GM10248 (cell line): ENCODE measurements at regions of chr6 and their contacts with region 1.

Region 1: DNA sequence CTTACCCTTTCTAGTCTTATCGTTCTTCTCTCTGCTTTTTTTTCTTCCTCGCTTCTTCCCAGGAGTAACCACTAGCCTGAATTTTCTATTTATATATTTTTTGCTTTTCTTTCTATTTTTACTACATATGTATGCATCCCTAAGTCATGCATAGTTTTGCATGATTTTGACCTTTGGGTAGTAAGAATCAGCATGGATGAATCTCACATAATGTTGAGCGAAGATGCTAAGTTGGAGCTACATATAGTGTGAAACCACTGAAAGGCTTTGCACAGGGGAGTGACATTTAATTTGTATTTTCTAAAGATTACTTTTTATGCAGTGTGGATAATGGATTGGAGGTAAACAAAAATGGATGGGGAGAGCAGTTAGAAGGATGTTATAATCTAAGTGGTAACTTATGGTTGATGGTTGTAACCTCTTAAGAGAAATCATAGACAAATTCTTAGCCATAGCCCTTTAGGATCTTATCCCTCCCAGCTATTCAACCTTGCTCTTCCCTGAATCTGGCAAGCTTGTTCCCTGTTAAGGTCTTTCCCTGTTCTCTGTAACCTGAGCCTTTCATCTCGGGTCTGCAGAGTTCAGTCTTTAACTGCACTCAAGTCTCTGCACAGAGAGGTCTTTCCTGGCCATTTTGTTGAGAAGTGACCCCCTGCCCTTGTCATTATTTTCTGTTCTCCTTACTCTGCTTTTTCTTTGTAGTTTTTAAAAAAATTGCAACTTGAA is 18.0 kb downstream of the PEX7 start:
- DNase-seq: no peak
- CTCF ChIP-seq: no peak

Region 2: GRCh38 chr6:136706420-136706819 is 134.0 kb before region 1 on chr6:
- CTCF ChIA-PET with region 1: no interaction called
- POLR2A ChIA-PET with region 1: no interaction called
- DNase-seq: no peak
- CTCF ChIP-seq: no peak

Region 3: GRCh38 chr6:136822376-136823127 is 17.9 kb before region 1 on chr6 and contains the start of gene PEX7:
- CTCF ChIA-PET with region 1: interaction called, 13 read pairs
- POLR2A ChIA-PET with region 1: no interaction called
- DNase-seq: peak; percentile 91
- CTCF ChIP-seq: peak; percentile 79

Region 4: GRCh38 chr6:137089305-137089704 is 248.9 kb after region 1 on chr6:
- CTCF ChIA-PET with region 1: no interaction called
- POLR2A ChIA-PET with region 1: no interaction called
- DNase-seq: no peak
- CTCF ChIP-seq: no peak

Region 5: DNA sequence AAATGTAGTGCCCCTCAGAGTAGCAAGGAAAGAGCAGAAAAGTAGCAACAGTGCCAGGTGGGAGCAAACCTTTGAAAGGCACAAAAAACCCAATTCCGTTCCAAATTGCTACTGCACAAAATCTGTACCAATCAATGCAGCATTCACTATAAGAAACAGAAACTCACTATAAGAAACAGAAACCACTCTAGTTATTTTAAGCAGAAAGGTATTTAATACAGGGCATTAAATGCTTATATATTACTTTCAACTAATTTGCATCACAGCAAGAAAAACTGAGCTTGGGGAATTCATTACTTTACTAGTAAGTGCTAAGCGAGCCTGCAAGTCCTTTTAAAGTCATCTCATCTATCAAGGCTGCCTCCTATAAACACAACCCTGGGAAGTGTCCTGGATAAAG is 770.3 kb after region 1 on chr6:
- CTCF ChIA-PET with region 1: no interaction called
- POLR2A ChIA-PET with region 1: no interaction called
- DNase-seq: no peak
- CTCF ChIP-seq: no peak